ENCODE measurements at regions of chr4 and their contacts with region 1.

Region 1: DNA sequence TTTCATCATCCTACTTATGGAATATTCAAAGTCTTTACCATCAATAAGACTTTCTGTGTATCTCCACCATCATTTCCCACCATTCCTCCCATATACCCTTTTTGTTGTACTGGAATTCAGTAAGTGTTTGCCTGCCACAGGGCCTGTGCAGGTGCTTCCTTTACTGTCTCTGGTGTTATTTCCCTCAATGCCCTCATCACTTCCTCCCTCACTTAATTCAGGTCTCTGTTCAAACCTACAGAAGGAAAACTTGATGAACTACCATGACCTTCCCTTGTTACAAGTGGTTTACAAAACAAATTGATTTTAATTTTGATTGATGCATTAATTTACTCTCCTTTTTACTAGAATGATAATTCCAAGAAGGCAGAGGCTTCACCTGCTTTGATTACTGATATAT is 159.5 kb upstream of the FAT4 start:
- DNase-seq: peak; percentile 89
- H3K4me3 ChIP-seq: no peak overlapping the region
- H3K27ac ChIP-seq: peak overlapping the region; percentile 37
- H3K4me1 ChIP-seq: peaks cover 7% of the 10 kb centered on the region
- H3K27me3 ChIP-seq: no peaks in the 10 kb centered on the region
- CTCF ChIP-seq: no peak
- POLR2A ChIP-seq: no peak

Region 2: DNA sequence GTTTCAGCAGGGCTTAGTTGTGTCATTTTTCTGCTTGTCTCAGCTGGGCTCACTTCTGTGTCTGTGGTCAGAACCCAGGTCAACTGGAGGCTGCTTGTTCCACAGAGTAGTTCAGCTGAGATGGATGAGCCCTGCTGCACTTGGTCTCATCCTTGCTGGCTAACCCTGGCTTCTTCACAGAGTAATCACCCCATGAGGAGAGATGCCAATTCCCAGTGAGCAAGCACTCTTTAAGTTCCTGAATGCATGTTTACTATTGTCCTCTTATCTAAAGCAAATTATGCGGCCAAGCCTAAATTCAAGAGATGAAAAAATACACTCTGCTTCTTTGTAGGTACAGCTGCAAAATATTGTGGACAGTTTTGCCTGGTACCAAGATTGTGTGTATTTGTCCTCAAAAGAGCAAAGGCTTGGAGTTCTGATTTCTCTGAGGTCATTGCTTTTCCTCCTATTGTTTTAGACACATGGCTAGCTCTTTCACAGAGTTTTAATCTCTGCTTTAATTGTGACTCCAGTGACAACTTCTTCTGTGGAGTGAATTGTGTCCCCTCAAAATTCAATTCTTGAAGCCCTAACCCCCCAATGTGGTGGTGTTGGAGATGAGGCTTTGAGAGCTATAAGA is 206.2 kb before region 1 on chr4:
- CTCF ChIA-PET with region 1: no interaction called
- POLR2A ChIA-PET with region 1: no interaction called
- dilution Hi-C with region 1: no loop called
- intact Hi-C with region 1: loop called (anchors 5 kb)
- DNase-seq: peak; percentile 80
- H3K4me3 ChIP-seq: no peak overlapping the region
- H3K27ac ChIP-seq: peak overlapping the region; percentile 99
- H3K4me1 ChIP-seq: peaks cover 51% of the 10 kb centered on the region
- H3K27me3 ChIP-seq: no peaks in the 10 kb centered on the region
- CTCF ChIP-seq: no peak
- POLR2A ChIP-seq: no peak

Region 3: DNA sequence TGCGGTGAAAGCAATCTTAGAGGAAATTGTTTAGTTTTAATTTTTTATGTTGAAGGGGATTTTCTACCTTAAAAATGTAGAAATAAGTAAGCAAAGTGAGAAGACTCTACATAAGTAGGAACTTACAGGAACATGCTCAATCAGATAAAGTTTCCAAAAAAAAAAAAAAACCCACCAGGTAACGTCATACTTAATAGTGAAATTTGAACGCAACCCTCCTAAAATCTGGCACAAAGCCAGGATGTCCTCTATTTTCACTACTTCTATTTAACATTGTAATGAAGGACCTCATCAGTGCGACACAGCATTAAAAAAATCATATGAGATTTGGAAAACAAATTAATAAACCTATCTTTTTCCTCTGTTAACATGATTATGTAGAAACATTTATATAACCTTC is 24.5 kb after region 1 on chr4:
- CTCF ChIA-PET with region 1: no interaction called
- POLR2A ChIA-PET with region 1: no interaction called
- dilution Hi-C with region 1: no loop called
- intact Hi-C with region 1: no loop called
- DNase-seq: no peak
- H3K4me3 ChIP-seq: no peak overlapping the region
- H3K27ac ChIP-seq: no peak overlapping the region
- H3K4me1 ChIP-seq: no peaks in the 10 kb centered on the region
- H3K27me3 ChIP-seq: no peaks in the 10 kb centered on the region
- CTCF ChIP-seq: no peak
- POLR2A ChIP-seq: no peak

Region 4: GRCh38 chr4:125198916-125199315 is 43.7 kb after region 1 on chr4:
- CTCF ChIA-PET with region 1: no interaction called
- POLR2A ChIA-PET with region 1: no interaction called
- dilution Hi-C with region 1: no loop called
- intact Hi-C with region 1: loop called (anchors 1 kb)
- DNase-seq: peak; percentile 84
- H3K4me3 ChIP-seq: no peak overlapping the region
- H3K27ac ChIP-seq: peak overlapping the region; percentile 90
- H3K4me1 ChIP-seq: peaks cover 18% of the 10 kb centered on the region
- H3K27me3 ChIP-seq: no peaks in the 10 kb centered on the region
- CTCF ChIP-seq: no peak
- POLR2A ChIP-seq: no peak

Measured in endothelial cell of umbilical vein (primary cell).